Activated naive CD4-positive, alpha-beta T cell treated with anti-CD3 and anti-CD28 coated beads for 36 hours (primary cell): ENCODE measurements at regions of chr16 and their contacts with region 1.

Region 1: DNA sequence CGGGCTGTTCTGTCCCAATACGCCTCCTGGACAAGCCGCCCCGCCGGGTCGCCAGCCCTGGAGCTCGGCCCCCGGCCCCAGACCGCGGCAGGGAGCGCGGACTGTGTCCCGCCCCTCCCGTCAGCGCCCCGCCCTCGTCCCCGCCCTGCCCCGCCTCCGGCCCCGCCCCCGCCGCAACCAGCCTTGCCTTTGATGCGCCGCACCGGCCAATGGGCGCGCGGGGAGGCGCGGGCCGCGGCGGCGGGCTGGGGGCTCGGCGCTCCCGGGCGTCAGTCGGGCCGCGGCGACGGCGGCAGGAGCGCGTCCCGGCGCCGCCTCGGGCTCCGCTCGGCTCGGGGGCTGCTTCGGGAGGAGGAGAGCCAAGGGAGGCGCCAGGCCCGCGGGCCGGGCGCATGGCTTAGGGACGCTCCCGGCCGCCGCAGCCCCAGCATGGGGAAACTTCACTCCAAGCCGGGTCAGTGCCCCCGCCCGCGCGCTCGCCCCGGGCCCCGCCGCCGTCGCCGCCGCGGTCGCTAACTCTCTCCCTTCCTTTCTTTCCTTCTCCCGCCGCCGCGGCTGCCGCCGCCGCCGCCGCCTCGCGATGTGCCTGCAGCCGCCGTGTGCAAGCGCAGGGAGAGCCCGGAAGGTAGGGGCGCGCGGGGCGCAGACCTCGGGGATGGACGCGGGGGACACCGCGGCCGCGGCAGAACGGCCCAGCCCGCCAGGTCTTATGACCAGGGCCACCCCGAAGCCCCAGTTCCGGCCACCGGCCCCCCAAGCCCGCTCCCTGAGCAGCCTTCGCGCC is at the start of gene NKD1:
- DNase-seq: peak; percentile 68
- H3K4me3 Mint-ChIP-seq: peak within 1 kb of the TSS; percentile 85
- H3K27ac Mint-ChIP-seq: no peak within 1 kb of the TSS
- H3K4me1 Mint-ChIP-seq: peaks cover 18% of the 10 kb centered on the region
- H3K27me3 Mint-ChIP-seq: no peaks in the 10 kb centered on the region
- total RNA-seq, gene NKD1: 2.6 to 3.2 TPM

Region 2: DNA sequence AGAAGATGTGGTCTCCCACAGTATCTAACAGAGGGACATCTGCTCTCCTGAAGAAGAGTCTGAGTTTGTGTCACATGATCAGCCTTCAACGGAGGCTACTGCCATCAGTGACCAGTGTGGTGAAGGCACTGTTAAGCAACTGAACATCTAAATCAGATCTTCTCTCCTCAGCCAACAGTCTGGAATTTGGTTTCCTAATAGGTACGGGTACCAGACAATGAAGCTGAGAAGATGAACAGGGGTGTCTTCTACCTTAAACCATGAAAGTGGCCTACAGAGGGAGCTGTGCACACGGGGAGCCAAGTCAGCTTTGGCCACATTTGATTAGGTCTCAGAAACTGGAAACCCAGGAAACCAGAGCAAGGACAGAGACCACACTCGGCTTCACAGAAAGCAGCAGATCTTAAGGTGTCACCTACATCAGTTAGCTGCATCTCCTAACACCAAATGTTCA is 221.3 kb before region 1 on chr16:
- CTCF ChIA-PET with region 1: interaction called, 3 read pairs
- intact Hi-C with region 1: loop called (anchors 5 kb)
- DNase-seq: peak; percentile 81
- H3K4me3 Mint-ChIP-seq: no peak overlapping the region
- H3K27ac Mint-ChIP-seq: peak overlapping the region; percentile 50
- H3K4me1 Mint-ChIP-seq: peaks cover 56% of the 10 kb centered on the region
- H3K27me3 Mint-ChIP-seq: no peaks in the 10 kb centered on the region

Region 3: GRCh38 chr16:50354629-50355456 is 193.5 kb before region 1 on chr16:
- CTCF ChIA-PET with region 1: no interaction called
- intact Hi-C with region 1: no loop called
- DNase-seq: no peak
- H3K4me3 Mint-ChIP-seq: no peak overlapping the region
- H3K27ac Mint-ChIP-seq: no peak overlapping the region
- H3K4me1 Mint-ChIP-seq: peaks cover 25% of the 10 kb centered on the region
- H3K27me3 Mint-ChIP-seq: no peaks in the 10 kb centered on the region

Region 4: DNA sequence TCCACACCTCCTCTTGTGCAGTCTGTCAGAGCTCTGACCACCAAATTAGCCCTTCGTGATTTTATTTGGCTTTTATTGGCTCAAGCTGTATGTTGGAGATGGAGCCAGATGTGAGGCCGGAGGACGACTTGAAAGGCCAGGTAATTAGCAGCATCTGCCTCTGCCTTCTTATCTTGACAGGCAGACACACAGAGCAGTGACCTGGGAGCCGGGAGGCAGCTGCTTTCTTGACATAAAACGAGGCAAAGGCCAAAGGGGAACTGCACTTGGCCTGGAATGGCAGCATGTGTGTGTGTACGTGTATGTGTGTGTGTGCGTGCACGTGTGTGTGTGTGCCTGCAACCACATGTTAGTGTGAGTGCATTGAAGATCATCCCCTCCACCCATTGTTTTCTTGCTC is 122.7 kb before region 1 on chr16:
- CTCF ChIA-PET with region 1: no interaction called
- intact Hi-C with region 1: no loop called
- DNase-seq: no peak
- H3K4me3 Mint-ChIP-seq: no peak overlapping the region
- H3K27ac Mint-ChIP-seq: no peak overlapping the region
- H3K4me1 Mint-ChIP-seq: no peaks in the 10 kb centered on the region
- H3K27me3 Mint-ChIP-seq: no peaks in the 10 kb centered on the region

Region 5: DNA sequence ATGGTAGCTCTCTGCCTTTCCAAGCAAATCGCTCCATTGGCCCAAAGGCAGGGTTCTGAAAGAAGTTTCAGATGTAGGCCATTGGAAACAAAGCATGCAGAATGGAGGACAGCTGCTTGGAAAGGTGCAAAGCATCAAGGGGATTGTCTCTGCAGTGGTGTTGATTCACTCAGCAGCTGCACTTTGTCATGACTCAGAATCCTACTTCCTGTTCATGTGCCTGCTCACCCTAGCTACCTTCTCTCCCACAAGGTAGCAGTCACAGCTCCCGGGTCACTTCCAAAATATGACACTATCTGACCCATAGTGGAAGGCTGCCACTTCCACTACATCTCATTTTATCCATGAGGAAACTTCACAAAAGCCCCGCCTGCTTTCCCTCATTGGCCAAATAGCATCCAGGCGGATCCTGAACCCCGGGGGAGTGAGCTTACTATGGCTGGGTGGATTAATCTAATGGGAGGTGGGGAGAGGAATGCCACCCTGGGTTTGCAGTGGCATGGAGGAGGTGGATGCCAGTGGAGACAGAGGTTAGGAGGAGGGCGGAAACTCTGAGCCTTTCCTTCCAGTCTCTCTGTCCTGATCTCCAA is 74.9 kb before region 1 on chr16:
- CTCF ChIA-PET with region 1: no interaction called
- intact Hi-C with region 1: loop called (anchors 2 kb)
- DNase-seq: peak; percentile 66
- H3K4me3 Mint-ChIP-seq: no peak overlapping the region
- H3K27ac Mint-ChIP-seq: peak overlapping the region; percentile 51
- H3K4me1 Mint-ChIP-seq: peaks cover 23% of the 10 kb centered on the region
- H3K27me3 Mint-ChIP-seq: peaks cover 4% of the 10 kb centered on the region

Region 6: GRCh38 chr16:50559804-50560514 is 11.6 kb after region 1 on chr16:
- CTCF ChIA-PET with region 1: no interaction called
- intact Hi-C with region 1: no loop called
- DNase-seq: no peak
- H3K4me3 Mint-ChIP-seq: no peak overlapping the region
- H3K27ac Mint-ChIP-seq: no peak overlapping the region
- H3K4me1 Mint-ChIP-seq: peaks cover 10% of the 10 kb centered on the region
- H3K27me3 Mint-ChIP-seq: no peaks in the 10 kb centered on the region

Region 7: DNA sequence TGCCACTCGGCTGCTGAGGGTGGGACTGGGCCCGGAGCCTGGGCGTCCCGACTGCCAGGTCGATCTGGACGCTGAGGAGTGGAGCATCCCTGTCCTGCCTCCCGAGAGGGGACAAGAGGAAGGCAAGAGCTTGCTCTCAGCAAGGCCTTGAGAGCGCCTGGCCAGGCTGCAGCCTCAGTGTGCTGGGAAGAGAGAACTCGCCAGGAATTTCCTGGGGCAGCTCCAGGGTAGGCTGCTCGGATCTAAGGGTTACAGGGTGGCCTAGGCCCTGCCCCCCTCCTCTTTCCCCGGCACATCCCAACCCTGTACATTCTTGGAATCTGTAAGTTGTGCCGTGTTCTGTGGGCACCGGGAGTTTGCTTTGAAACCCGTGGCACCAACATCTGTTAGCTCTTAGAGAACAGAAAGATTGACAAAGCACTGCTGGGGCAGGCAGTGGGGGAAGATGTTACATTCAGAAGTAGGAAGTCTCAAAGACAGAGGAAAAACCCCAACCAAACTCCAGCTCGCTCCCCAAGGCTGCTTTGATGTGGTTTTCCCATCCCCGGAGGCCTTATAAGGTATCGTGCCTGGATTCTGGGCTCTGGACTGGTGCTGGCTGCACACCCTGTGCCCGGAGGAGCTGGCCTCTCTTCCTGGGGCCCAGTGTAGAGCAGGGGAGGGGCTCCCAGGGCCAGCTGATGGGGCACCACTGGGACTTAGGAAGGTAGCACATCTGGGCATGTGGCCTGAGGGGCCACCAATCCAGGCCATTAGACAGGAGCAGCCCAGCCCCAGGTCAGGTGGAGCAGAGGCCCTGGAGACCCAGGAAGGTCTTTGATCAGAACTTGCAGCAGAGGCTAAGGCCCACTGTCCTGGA is 55.1 kb after region 1 on chr16:
- CTCF ChIA-PET with region 1: no interaction called
- intact Hi-C with region 1: loop called (anchors 2 kb)
- DNase-seq: peak; percentile 38
- H3K4me3 Mint-ChIP-seq: no peak overlapping the region
- H3K27ac Mint-ChIP-seq: peak overlapping the region; percentile 67
- H3K4me1 Mint-ChIP-seq: peaks cover 44% of the 10 kb centered on the region
- H3K27me3 Mint-ChIP-seq: no peaks in the 10 kb centered on the region

Region 8: DNA sequence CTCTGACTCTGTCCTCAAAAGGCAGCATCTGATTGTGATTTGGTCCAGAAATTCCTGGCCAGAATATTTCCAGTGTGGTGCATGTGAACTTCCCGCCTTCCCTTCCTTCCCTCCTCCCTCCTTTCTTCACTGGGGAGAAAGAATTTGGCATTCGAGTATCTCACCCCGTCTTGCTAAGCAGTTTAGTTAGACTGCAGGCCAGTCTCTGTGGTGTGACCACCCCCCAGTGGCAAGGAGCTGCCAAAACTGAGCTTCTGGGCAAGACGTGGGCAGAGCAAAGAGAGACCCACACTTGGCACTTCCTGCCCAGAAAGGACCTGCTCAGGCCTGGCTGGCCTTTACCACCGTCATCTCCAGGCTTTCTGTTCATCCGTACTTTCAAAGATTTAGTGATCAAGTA is 96.4 kb after region 1 on chr16:
- CTCF ChIA-PET with region 1: no interaction called
- intact Hi-C with region 1: loop called (anchors 5 kb)
- DNase-seq: peak; percentile 67
- H3K4me3 Mint-ChIP-seq: no peak overlapping the region
- H3K27ac Mint-ChIP-seq: no peak overlapping the region
- H3K4me1 Mint-ChIP-seq: peaks cover 2% of the 10 kb centered on the region
- H3K27me3 Mint-ChIP-seq: no peaks in the 10 kb centered on the region